Activated CD4-positive, alpha-beta T cell treated with anti-CD3 and anti-CD28 coated beads for 36 hours (primary cell): ENCODE measurements at regions of chr19 and their contacts with region 1.

Region 1: GRCh38 chr19:40139533-40140287 is 49.0 kb upstream of the ZNF780A start:
- DNase-seq: no peak
- ATAC-seq: no peak
- H3K4me3 Mint-ChIP-seq: no peak overlapping the region
- H3K27ac Mint-ChIP-seq: no peak overlapping the region
- H3K4me1 Mint-ChIP-seq: peaks cover 13% of the 10 kb centered on the region
- H3K27me3 Mint-ChIP-seq: no peaks in the 10 kb centered on the region

Region 2: DNA sequence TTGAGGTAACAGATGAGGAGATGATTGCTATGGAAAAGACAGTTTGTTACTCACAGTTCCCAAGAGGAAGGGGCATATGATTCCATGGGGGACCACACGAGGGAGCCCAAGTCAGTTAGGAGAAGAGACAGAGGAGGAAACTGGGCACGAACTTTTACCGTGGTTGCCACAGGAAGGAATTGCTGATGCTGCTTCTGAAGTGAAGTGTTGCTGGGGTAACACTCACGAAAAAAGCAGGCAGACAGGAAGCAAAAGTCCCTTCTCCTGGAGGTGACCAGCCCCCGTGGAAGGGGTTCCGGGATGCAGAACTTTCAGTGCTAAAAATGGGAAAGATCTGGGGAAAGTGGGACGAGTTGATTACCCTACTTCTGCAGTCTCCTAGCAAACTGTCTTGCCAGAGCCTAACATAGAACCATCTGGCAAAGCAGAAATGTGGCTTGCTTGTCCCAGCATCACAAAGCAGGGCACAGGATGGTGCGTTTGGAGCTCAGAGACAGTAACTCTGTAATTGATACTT is 16.1 kb after region 1 on chr19:
- CTCF ChIA-PET with region 1: interaction called, 10 read pairs
- POLR2A ChIA-PET with region 1: interaction called, 14 read pairs
- intact Hi-C with region 1: no loop called
- DNase-seq: no peak
- ATAC-seq: no peak
- H3K4me3 Mint-ChIP-seq: no peak overlapping the region
- H3K27ac Mint-ChIP-seq: no peak overlapping the region
- H3K4me1 Mint-ChIP-seq: peaks cover 5% of the 10 kb centered on the region
- H3K27me3 Mint-ChIP-seq: no peaks in the 10 kb centered on the region

Region 3: GRCh38 chr19:40190891-40191835 is 51.5 kb after region 1 on chr19 and contains the start of gene MAP3K10:
- CTCF ChIA-PET with region 1: interaction called, 7 read pairs
- POLR2A ChIA-PET with region 1: no interaction called
- intact Hi-C with region 1: loop called (anchors 2 kb)
- DNase-seq: peak; percentile 89
- ATAC-seq: peak; percentile 88
- H3K4me3 Mint-ChIP-seq: peak within 1 kb of the TSS; percentile 80
- H3K27ac Mint-ChIP-seq: peak within 1 kb of the TSS; percentile 92
- H3K4me1 Mint-ChIP-seq: peaks cover 20% of the 10 kb centered on the region
- H3K27me3 Mint-ChIP-seq: no peaks in the 10 kb centered on the region
- total RNA-seq, gene MAP3K10: 8.7 to 10.8 TPM

Region 4: DNA sequence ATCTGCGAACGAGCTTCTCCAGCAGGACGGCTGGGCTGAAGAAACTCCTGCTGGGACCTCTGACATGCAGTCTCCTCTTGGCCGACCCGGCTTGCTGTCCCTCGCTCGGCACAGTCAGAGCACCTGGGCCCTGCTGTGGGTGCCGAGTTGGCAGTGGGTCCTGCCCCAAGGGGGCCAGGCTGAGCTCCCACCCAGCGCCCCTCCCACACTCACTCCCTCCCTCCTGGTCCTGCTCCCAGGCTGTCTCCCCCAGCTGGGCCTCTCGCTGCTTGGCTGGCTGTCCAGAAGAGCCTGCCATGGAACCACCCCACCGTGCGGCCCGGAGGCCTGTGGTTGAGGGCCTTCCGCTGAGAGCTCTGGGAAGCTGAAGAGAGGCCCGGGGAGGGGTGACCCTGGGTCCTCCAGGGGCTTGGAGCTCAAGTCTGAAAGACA is 139.4 kb after region 1 on chr19:
- CTCF ChIA-PET with region 1: no interaction called
- POLR2A ChIA-PET with region 1: interaction called, 14 read pairs
- intact Hi-C with region 1: no loop called
- DNase-seq: no peak
- ATAC-seq: no peak
- H3K4me3 Mint-ChIP-seq: no peak overlapping the region
- H3K27ac Mint-ChIP-seq: no peak overlapping the region
- H3K4me1 Mint-ChIP-seq: peaks cover 77% of the 10 kb centered on the region
- H3K27me3 Mint-ChIP-seq: no peaks in the 10 kb centered on the region

Region 5: GRCh38 chr19:40598121-40598917 is 458.6 kb after region 1 on chr19:
- CTCF ChIA-PET with region 1: no interaction called
- POLR2A ChIA-PET with region 1: no interaction called
- intact Hi-C with region 1: loop called in 1 of 2 experiments (anchors 2 kb)
- DNase-seq: peak; percentile 92
- ATAC-seq: peak; percentile 71
- H3K4me3 Mint-ChIP-seq: peak overlapping the region; percentile 23
- H3K27ac Mint-ChIP-seq: no peak overlapping the region
- H3K4me1 Mint-ChIP-seq: peaks cover 50% of the 10 kb centered on the region
- H3K27me3 Mint-ChIP-seq: peaks cover 34% of the 10 kb centered on the region